Naive thymus-derived CD8-positive, alpha-beta T cell (primary cell): ENCODE measurements at regions of chr17 and their contacts with region 1.

Region 1: GRCh38 chr17:50865984-50866774 is at the start of gene TOB1:
- DNase-seq: peak; percentile 90 to 98 (median 96)
- ATAC-seq: peak; percentile 63 to 66
- H3K4me3 Mint-ChIP-seq: peak within 1 kb of the TSS; percentile 80 to 100 (median 99)
- H3K27ac Mint-ChIP-seq: peak within 1 kb of the TSS; percentile 96 to 100 (median 100)
- H3K4me1 Mint-ChIP-seq: peaks cover 31 to 66% (median 58%) of the 10 kb centered on the region in 4 donors
- H3K27me3 Mint-ChIP-seq: peaks cover 0 to 1% (median 0%) of the 10 kb centered on the region in 5 donors
- polyA plus RNA-seq, gene TOB1: 42.9 to 114 (median 65.1) TPM

Region 2: DNA sequence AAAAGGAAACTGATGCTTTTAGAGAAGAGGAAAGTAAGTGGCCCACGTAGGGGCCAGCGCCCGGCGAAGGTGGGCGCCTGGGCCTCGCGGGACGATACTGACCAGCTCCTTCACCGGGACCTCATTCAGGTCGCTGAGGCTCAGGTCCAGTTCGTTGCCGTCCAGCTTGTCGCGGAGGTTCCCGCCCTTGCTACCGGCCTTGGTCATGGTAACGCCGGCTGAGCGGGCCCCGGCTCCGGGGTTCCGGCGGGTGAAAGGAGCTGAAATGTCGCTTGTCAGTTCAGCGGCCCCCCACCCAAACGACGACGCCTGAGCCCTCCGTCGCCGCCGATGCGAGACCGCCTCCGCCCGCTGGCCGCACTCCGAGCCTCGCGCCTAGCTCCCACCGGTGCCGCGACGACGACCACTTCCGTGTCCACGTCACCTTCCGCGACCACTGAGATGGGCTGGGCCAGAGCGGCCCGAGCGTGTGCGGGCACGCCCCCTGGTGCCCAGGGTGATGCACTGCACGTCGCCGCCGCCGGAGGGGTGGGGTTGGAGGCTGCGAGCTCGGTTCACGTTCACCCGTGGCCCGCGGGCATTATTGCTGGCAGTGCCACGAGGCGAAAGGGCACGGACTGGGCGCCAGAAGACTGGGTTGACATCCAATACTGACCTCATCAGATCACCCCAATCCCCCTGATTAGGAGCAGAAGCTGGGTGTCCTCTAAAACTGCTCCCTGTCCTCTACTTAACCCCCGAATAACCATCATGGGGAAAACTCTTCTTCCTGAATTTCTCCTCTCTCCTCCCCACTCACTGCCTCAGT is 468.9 kb before region 1 on chr17 and contains the start of gene LRRC59:
- POLR2A ChIA-PET with region 1: no interaction called
- DNase-seq: peak; percentile 87 to 95 (median 93)
- ATAC-seq: peak; percentile 97 to 98
- H3K4me3 Mint-ChIP-seq: peak within 1 kb of the TSS; percentile 84 to 96 (median 94)
- H3K27ac Mint-ChIP-seq: peak within 1 kb of the TSS; percentile 87 to 96 (median 94)
- H3K4me1 Mint-ChIP-seq: peaks cover 16 to 45% (median 36%) of the 10 kb centered on the region in 4 donors
- H3K27me3 Mint-ChIP-seq: no peaks in the 10 kb centered on the region
- polyA plus RNA-seq, gene LRRC59: 12.8 to 14.1 (median 13.8) TPM

Region 3: DNA sequence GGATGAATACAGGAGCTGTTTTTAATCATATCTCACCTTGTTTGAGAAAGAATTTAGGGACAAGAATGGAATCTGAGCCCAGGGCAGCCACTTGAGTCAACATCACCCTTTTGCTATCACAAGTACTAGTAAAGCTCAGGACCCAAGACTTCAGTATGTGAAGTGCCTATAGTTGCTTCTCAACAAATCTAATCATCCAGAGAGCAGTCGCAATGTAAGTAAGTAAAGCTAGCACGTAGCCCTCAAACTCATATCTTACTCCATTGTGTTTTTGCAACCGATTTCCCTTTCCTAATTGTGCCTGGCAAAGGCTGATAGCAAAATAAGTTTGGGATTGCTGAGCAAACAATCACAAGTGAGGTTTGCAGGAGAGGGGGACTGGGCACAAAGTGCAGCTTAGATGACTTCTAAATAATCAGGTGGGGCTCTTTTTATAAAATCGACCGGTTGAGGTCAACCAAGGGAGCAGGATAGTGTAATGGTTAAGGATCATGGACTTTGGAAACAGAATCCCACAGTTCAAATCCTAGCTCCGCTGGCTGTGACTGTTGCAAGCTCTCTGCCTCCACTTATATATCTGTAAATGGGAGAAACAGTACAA is 13.1 kb before region 1 on chr17:
- POLR2A ChIA-PET with region 1: interaction called, 171 read pairs
- DNase-seq: no peak
- ATAC-seq: no peak
- H3K4me3 Mint-ChIP-seq: peak overlapping the region in 8 of 10 donors; percentile 70 to 88 (median 84)
- H3K27ac Mint-ChIP-seq: peak overlapping the region in 9 of 10 donors; percentile 87 to 96 (median 93)
- H3K4me1 Mint-ChIP-seq: peaks cover 11 to 28% (median 23%) of the 10 kb centered on the region in 4 donors
- H3K27me3 Mint-ChIP-seq: no peaks in the 10 kb centered on the region

Region 4: GRCh38 chr17:50893183-50893993 is 27.2 kb after region 1 on chr17:
- POLR2A ChIA-PET with region 1: interaction called, 92 read pairs
- DNase-seq: no peak
- ATAC-seq: no peak
- H3K4me3 Mint-ChIP-seq: no peak overlapping the region
- H3K27ac Mint-ChIP-seq: peak overlapping the region in 1 of 10 donors; percentile 32
- H3K4me1 Mint-ChIP-seq: peaks cover 2 to 12% (median 6%) of the 10 kb centered on the region in 4 donors
- H3K27me3 Mint-ChIP-seq: no peaks in the 10 kb centered on the region

Region 5: DNA sequence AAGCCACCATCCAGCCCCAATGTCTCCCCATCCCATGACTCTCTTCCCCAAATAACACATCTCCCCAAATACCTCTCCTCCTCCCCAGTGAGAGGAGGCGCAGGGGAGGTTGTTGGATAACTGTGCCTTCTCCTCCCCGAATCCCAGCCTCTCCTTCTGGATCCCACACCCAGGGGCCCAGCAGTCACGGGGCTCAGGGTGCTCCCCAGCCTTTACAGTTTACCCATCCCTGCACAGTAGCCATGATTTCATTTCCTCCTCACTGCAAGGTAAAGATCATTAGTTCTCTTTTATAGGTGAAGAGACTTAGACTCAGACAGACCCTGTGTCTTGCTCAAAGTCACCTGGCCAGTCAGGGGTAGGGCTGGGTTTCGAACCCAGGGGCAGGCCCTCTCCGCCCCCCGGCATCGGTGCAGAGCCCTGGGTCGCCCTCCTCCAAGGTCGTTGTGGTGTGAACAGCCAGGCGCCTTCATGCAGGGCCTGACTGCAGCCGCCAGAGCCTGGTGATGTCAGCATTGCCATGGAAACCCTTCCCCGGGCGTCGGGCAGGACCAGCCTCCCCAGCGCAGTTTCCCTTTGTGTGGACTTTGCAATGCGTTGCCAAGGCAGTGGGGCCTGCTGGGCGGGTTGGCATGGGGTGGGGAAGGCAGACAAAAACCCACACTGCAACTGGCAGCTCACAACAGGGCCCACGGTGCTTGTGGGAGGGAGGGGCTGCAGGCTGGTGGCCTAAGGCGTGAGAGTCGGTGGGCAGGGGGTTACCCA is 53.3 kb after region 1 on chr17:
- POLR2A ChIA-PET with region 1: interaction called, 544 read pairs
- DNase-seq: peak; percentile 62 to 98 (median 90)
- ATAC-seq: peak; percentile 89 to 90
- H3K4me3 Mint-ChIP-seq: peak overlapping the region; percentile 66 to 92 (median 82)
- H3K27ac Mint-ChIP-seq: peak overlapping the region; percentile 97 to 100 (median 99)
- H3K4me1 Mint-ChIP-seq: peaks cover 31 to 71% (median 60%) of the 10 kb centered on the region in 4 donors
- H3K27me3 Mint-ChIP-seq: no peaks in the 10 kb centered on the region

Region 6: GRCh38 chr17:50949989-50950881 is 84.1 kb after region 1 on chr17:
- POLR2A ChIA-PET with region 1: interaction called, 535 read pairs
- DNase-seq: peak; percentile 34 to 84 (median 50)
- ATAC-seq: peak; percentile 92 to 95
- H3K4me3 Mint-ChIP-seq: peak overlapping the region in 3 of 10 donors; percentile 33 to 54 (median 45)
- H3K27ac Mint-ChIP-seq: peak overlapping the region in 9 of 10 donors; percentile 49 to 90 (median 70)
- H3K4me1 Mint-ChIP-seq: peaks cover 15 to 41% (median 36%) of the 10 kb centered on the region in 4 donors
- H3K27me3 Mint-ChIP-seq: no peaks in the 10 kb centered on the region

Region 7: GRCh38 chr17:51035431-51035830 is 169.3 kb after region 1 on chr17:
- POLR2A ChIA-PET with region 1: no interaction called
- DNase-seq: no peak
- ATAC-seq: no peak
- H3K4me3 Mint-ChIP-seq: no peak overlapping the region
- H3K27ac Mint-ChIP-seq: peak overlapping the region in 1 of 10 donors; percentile 11
- H3K4me1 Mint-ChIP-seq: peaks cover 10 to 28% (median 16%) of the 10 kb centered on the region in 4 donors
- H3K27me3 Mint-ChIP-seq: no peaks in the 10 kb centered on the region

Region 8: DNA sequence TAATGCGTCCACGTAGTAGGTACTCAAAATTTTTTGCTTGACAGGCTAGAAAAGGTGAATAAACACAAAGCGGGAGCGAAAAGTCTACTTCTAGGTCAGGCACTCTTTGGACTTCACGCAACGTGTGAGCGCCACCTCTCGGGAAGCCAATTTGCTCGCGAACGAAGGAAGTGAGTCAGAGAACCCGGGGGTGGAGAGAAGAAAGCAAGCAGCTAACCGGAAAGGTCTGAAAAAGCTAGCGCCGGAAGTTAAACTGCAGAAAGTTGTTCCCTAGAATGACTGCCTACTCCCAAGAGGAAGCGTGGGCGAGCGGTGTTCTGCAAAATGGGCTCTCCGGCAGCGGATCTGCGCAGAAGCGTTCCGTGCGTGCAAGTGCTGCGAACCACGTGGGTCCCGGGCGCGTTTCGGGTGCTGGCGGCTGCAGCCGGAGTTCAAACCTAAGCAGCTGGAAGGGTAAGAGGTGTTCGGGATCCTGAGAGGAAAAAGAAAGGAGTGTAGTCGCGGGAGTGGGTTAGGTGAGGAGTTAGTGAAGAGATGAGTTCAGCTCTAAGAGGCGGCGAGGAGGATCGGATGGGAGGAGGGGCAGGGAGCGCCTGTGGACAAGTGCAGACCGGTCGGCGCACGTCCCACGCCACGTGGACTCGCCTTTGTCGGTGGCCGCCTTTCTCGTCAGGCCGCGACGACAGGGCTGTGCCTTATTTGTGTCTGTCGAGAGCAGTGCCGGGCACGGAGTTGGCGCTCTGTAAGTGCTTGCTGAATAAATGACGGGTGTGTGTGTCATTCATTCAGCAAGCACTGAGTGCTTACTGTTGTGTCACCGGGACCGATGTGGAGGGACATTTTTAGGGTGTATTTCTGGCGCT is 287.3 kb after region 1 on chr17 and contains the start of gene NME1:
- POLR2A ChIA-PET with region 1: interaction called, 11 read pairs
- DNase-seq: peak; percentile 89 to 99 (median 98)
- ATAC-seq: peak; percentile 91 to 97
- H3K4me3 Mint-ChIP-seq: no peak within 1 kb of the TSS
- H3K27ac Mint-ChIP-seq: no peak within 1 kb of the TSS
- H3K4me1 Mint-ChIP-seq: peaks cover 0 to 12% (median 5%) of the 10 kb centered on the region in 4 donors
- H3K27me3 Mint-ChIP-seq: no peaks in the 10 kb centered on the region
- polyA plus RNA-seq, gene NME1: 64.6 to 95.2 (median 82.1) TPM